B cell (primary cell): ENCODE measurements at regions of chr12 and their contacts with region 1.

Region 1: GRCh38 chr12:9750276-9751203 is 10.2 kb downstream of the CD69 start:
- DNase-seq: peak; percentile 86
- ATAC-seq: peak; percentile 84
- H3K4me3 ChIP-seq: no peak overlapping the region
- H3K4me3 Mint-ChIP-seq: peak overlapping the region; percentile 20
- H3K27ac ChIP-seq: no peak overlapping the region
- H3K27ac Mint-ChIP-seq: no peak overlapping the region
- H3K4me1 ChIP-seq: peaks cover 7 to 13% of the 10 kb centered on the region in 2 donors
- H3K4me1 Mint-ChIP-seq: peaks cover 30% of the 10 kb centered on the region
- H3K27me3 ChIP-seq: no peaks in the 10 kb centered on the region
- H3K27me3 Mint-ChIP-seq: no peaks in the 10 kb centered on the region
- CTCF ChIP-seq: peak; percentile 91

Region 2: GRCh38 chr12:9634177-9634803 is 116.2 kb before region 1 on chr12:
- CTCF ChIA-PET with region 1: interaction called, 113 read pairs
- POLR2A ChIA-PET with region 1: no interaction called
- intact Hi-C with region 1: loop called (anchors 1 kb)
- DNase-seq: peak; percentile 86
- ATAC-seq: peak; percentile 75
- H3K4me3 ChIP-seq: no peak overlapping the region
- H3K4me3 Mint-ChIP-seq: peak overlapping the region; percentile 72
- H3K27ac ChIP-seq: peak overlapping the region; percentile 1 to 82
- H3K27ac Mint-ChIP-seq: peak overlapping the region; percentile 83
- H3K4me1 ChIP-seq: peaks cover 48 to 53% of the 10 kb centered on the region in 2 donors
- H3K4me1 Mint-ChIP-seq: peaks cover 59% of the 10 kb centered on the region
- H3K27me3 ChIP-seq: no peaks in the 10 kb centered on the region
- H3K27me3 Mint-ChIP-seq: no peaks in the 10 kb centered on the region
- CTCF ChIP-seq: peak; percentile 92

Region 3: DNA sequence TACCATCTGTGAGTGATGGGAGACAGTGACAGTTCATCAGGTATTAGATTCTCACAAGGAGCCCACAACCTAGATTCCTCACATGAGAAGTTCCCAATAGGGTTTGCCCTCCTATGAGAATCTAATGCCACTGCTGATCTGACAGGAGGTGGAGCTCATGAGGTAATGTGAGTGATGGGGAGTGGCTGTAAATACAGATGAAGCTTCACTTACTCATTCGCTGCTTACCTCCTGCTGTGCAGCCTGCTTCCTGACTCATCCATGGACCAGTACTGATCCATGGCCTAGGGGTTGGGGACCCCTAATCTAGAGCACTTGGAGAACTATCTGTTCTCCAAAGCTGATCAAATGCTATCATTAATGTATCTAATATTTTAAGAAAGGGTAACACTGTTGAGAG is 63.3 kb before region 1 on chr12:
- CTCF ChIA-PET with region 1: interaction called, 20 read pairs
- POLR2A ChIA-PET with region 1: no interaction called
- intact Hi-C with region 1: no loop called
- DNase-seq: no peak
- ATAC-seq: no peak
- H3K4me3 ChIP-seq: no peak overlapping the region
- H3K4me3 Mint-ChIP-seq: no peak overlapping the region
- H3K27ac ChIP-seq: peak overlapping the region in 1 of 2 donors; percentile 67
- H3K27ac Mint-ChIP-seq: no peak overlapping the region
- H3K4me1 ChIP-seq: peaks cover 33 to 44% of the 10 kb centered on the region in 2 donors
- H3K4me1 Mint-ChIP-seq: peaks cover 52% of the 10 kb centered on the region
- H3K27me3 ChIP-seq: no peaks in the 10 kb centered on the region
- H3K27me3 Mint-ChIP-seq: no peaks in the 10 kb centered on the region
- CTCF ChIP-seq: no peak

Region 4: GRCh38 chr12:9721394-9722092 is 29.0 kb before region 1 on chr12:
- CTCF ChIA-PET with region 1: interaction called, 17 read pairs
- POLR2A ChIA-PET with region 1: no interaction called
- intact Hi-C with region 1: no loop called
- DNase-seq: peak; percentile 85
- ATAC-seq: peak; percentile 89
- H3K4me3 ChIP-seq: peak overlapping the region in 1 of 5 experiments; percentile 43
- H3K4me3 Mint-ChIP-seq: peak overlapping the region; percentile 60
- H3K27ac ChIP-seq: peak overlapping the region; percentile 88 to 91
- H3K27ac Mint-ChIP-seq: peak overlapping the region; percentile 85
- H3K4me1 ChIP-seq: peaks cover 71 to 94% of the 10 kb centered on the region in 2 donors
- H3K4me1 Mint-ChIP-seq: peaks cover 86% of the 10 kb centered on the region
- H3K27me3 ChIP-seq: no peaks in the 10 kb centered on the region
- H3K27me3 Mint-ChIP-seq: no peaks in the 10 kb centered on the region
- CTCF ChIP-seq: no peak

Region 5: DNA sequence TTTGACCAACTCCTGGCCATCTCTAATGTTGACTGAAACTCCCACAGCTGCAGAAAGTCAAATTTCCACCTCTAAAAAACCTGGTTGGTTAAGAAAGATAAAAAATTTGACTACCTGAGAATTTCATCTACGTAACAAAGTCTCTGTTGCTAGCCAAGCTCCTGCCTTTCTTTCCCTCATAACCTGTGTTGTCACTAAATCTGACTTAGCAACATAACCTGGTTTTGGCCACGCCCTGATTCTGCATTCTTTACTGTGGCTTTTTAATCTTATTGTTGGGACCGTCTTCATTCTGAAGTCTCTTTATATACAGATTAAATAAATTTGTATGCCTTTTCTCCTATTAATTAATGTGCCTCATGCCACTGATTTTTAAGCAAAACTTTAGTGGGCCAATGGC is 26.2 kb after region 1 on chr12:
- CTCF ChIA-PET with region 1: interaction called, 11 read pairs
- POLR2A ChIA-PET with region 1: no interaction called
- intact Hi-C with region 1: no loop called
- DNase-seq: no peak
- ATAC-seq: no peak
- H3K4me3 ChIP-seq: no peak overlapping the region
- H3K4me3 Mint-ChIP-seq: no peak overlapping the region
- H3K27ac ChIP-seq: no peak overlapping the region
- H3K27ac Mint-ChIP-seq: no peak overlapping the region
- H3K4me1 ChIP-seq: peaks cover 3 to 22% of the 10 kb centered on the region in 2 donors
- H3K4me1 Mint-ChIP-seq: peaks cover 34% of the 10 kb centered on the region
- H3K27me3 ChIP-seq: no peaks in the 10 kb centered on the region
- H3K27me3 Mint-ChIP-seq: no peaks in the 10 kb centered on the region
- CTCF ChIP-seq: no peak

Region 6: GRCh38 chr12:9869307-9870161 is 119.0 kb after region 1 on chr12 and contains the start of gene CLEC2B:
- CTCF ChIA-PET with region 1: interaction called, 14 read pairs
- POLR2A ChIA-PET with region 1: no interaction called
- intact Hi-C with region 1: no loop called
- DNase-seq: peak; percentile 76
- ATAC-seq: peak; percentile 66
- H3K4me3 ChIP-seq: peak within 1 kb of the TSS; percentile 51 to 97 (median 66)
- H3K4me3 Mint-ChIP-seq: peak within 1 kb of the TSS; percentile 92
- H3K27ac ChIP-seq: peak within 1 kb of the TSS; percentile 89 to 90
- H3K27ac Mint-ChIP-seq: peak within 1 kb of the TSS; percentile 99
- H3K4me1 ChIP-seq: peaks cover 14 to 18% of the 10 kb centered on the region in 2 donors
- H3K4me1 Mint-ChIP-seq: peaks cover 41% of the 10 kb centered on the region
- H3K27me3 ChIP-seq: no peaks in the 10 kb centered on the region
- H3K27me3 Mint-ChIP-seq: no peaks in the 10 kb centered on the region
- CTCF ChIP-seq: no peak
- total RNA-seq, gene CLEC2B: 30.5 and 31.6 TPM in 2 replicates

Region 7: GRCh38 chr12:10140001-10140400 is 389.5 kb after region 1 on chr12:
- CTCF ChIA-PET with region 1: interaction called, 21 read pairs
- POLR2A ChIA-PET with region 1: no interaction called
- intact Hi-C with region 1: loop called (anchors 2 kb)
- DNase-seq: peak; percentile 63
- ATAC-seq: no peak
- H3K4me3 ChIP-seq: no peak overlapping the region
- H3K4me3 Mint-ChIP-seq: no peak overlapping the region
- H3K27ac ChIP-seq: no peak overlapping the region
- H3K27ac Mint-ChIP-seq: no peak overlapping the region
- H3K4me1 ChIP-seq: no peaks in the 10 kb centered on the region
- H3K4me1 Mint-ChIP-seq: peaks cover 2% of the 10 kb centered on the region
- H3K27me3 ChIP-seq: peaks cover 0 to 18% (median 9%) of the 10 kb centered on the region in 4 experiments
- H3K27me3 Mint-ChIP-seq: peaks cover 38% of the 10 kb centered on the region
- CTCF ChIP-seq: peak; percentile 62